K562 (cell line): ENCODE measurements at regions of chr17 and their contacts with region 1.

Region 1: DNA sequence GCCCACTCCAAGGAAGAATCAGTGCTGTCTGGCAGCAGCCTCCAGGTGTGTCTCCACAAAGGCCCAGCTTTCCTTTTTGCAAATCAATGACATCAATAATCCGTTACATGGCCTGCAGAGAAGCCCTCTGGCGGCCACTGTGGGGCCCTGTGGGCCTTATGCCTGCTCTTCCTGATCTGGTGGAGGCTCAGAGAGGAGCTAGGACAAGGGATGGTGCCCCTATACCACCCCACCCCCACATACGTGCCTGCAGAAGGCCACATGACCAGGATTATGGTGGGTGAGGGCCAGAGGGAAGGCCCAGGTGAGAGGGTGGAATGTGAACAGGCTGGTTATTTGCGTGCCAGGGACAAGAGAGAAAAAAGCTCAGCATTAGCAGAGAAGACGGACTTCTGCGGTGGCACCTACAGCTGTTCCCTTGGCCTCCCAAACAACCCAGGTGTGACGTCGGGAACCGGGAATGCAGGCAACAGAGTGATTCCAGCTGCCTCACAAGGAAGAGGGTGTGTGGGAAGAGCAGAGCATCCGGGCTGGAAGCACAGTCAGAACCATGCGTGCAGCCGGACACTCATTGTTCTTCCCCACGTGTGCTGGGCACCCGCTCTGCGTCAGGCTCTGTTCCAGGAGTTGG is 22.5 kb downstream of the EIF4A3 start:
- DNase-seq: peak in 1 of 4 experiments; percentile 35
- ATAC-seq: peak; percentile 90
- H3K4me3 ChIP-seq: no peak overlapping the region
- H3K27ac ChIP-seq: no peak overlapping the region
- H3K4me1 ChIP-seq: peaks cover 0 to 11% of the 10 kb centered on the region in 2 experiments; a peak in 2 of 5 replicates
- H3K27me3 ChIP-seq: peaks cover 26 to 41% of the 10 kb centered on the region in 2 experiments; a peak in 4 of 5 replicates
- CTCF ChIP-seq: peak; percentile 50 to 65 (median 58)
- EP300 ChIP-seq: no peak
- POLR2A ChIP-seq: no peak
- RAD21 ChIP-seq: peak in 1 of 2 experiments; percentile 50; a peak in 2 of 4 replicates

Region 2: GRCh38 chr17:80008383-80008840 is 116.1 kb before region 1 on chr17:
- CTCF ChIA-PET with region 1: interaction called, 3 read pairs
- POLR2A ChIA-PET with region 1: no interaction called
- in situ Hi-C with region 1: no loop called
- intact Hi-C with region 1: loop called (anchors 5 kb)
- DNase-seq: peak; percentile 84 to 94 (median 91)
- ATAC-seq: peak; percentile 94
- H3K4me3 ChIP-seq: no peak overlapping the region
- H3K27ac ChIP-seq: no peak overlapping the region
- H3K4me1 ChIP-seq: peaks cover 0 to 40% of the 10 kb centered on the region in 2 experiments; a peak in 2 of 5 replicates
- H3K27me3 ChIP-seq: peaks cover 25 to 86% of the 10 kb centered on the region in 2 experiments
- CTCF ChIP-seq: peak; percentile 88 to 94 (median 93)
- EP300 ChIP-seq: no peak
- POLR2A ChIP-seq: no peak
- RAD21 ChIP-seq: peak; percentile 51 to 73

Region 3: DNA sequence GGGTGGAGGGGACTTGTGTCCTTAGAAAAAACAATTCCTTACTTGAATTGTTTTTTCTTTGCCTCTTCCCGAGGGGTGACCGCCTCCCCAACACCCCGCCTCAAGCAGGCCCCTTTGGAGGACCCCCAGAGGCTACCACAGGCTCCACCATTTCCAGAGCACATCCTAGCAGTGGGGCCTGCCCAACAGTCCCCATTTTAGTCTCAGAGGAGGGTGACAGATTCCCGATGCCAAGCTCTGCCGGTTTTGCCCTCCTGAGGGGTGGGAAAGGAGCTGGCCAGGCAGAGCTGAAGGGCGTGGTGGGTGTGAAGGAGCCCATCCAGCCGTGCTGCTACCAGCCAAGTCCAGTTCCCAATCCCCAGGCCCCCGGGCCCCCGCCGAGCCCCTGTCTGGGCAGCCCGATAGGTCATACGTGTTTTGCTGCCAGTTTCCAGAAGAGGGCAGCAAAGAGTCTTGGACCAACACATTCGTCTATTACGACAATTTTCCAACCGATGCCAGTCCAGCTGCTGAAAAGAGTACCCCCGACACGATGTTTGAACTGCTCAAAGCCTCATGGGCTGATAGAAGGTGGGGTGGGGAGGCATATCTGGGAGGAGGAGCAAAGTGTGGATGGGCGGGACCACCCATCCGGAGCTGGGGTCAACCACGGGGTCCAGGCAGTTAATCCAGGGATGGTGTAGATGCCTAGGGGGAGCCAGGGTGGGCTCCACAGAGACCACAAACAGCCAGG is 41.9 kb before region 1 on chr17:
- CTCF ChIA-PET with region 1: interaction called, 3 read pairs
- POLR2A ChIA-PET with region 1: no interaction called
- in situ Hi-C with region 1: no loop called
- intact Hi-C with region 1: loop called (anchors 1 kb)
- DNase-seq: peak; percentile 43 to 73 (median 56)
- ATAC-seq: peak; percentile 77
- H3K4me3 ChIP-seq: no peak overlapping the region
- H3K27ac ChIP-seq: no peak overlapping the region
- H3K4me1 ChIP-seq: peaks cover 0 to 7% of the 10 kb centered on the region in 2 experiments; a peak in 1 of 5 replicates
- H3K27me3 ChIP-seq: peaks cover 36 to 63% of the 10 kb centered on the region in 2 experiments
- CTCF ChIP-seq: peak; percentile 67 to 73 (median 68)
- EP300 ChIP-seq: no peak
- POLR2A ChIP-seq: no peak
- RAD21 ChIP-seq: peak; percentile 29 to 60

Region 4: GRCh38 chr17:80147035-80147836 is 22.8 kb after region 1 on chr17 and contains the start of gene EIF4A3:
- CTCF ChIA-PET with region 1: no interaction called
- POLR2A ChIA-PET with region 1: interaction called, 24 read pairs
- in situ Hi-C with region 1: no loop called
- intact Hi-C with region 1: no loop called
- DNase-seq: peak; percentile 90 to 99 (median 95)
- ATAC-seq: peak; percentile 96
- H3K4me3 ChIP-seq: peak within 1 kb of the TSS; percentile 95
- H3K27ac ChIP-seq: peak within 1 kb of the TSS; percentile 86
- H3K4me1 ChIP-seq: peaks cover 13 to 17% of the 10 kb centered on the region in 2 experiments; a peak in 4 of 5 replicates
- H3K27me3 ChIP-seq: no peaks in the 10 kb centered on the region
- CTCF ChIP-seq: no peak; a peak in 1 of 6 replicates
- EP300 ChIP-seq: no peak
- POLR2A ChIP-seq: peak; percentile 91
- RAD21 ChIP-seq: no peak
- polyA plus RNA-seq, gene EIF4A3: 62.7 to 67.0 TPM